ENCODE measurements at regions of chr10 and their contacts with region 1.

Region 1: GRCh38 chr10:128364631-128365030 is 238.4 kb upstream of the MKI67 start:
- DNase-seq: no peak
- H3K4me3 ChIP-seq: no peak overlapping the region
- H3K27ac ChIP-seq: no peak overlapping the region
- H3K4me1 ChIP-seq: no peaks in the 10 kb centered on the region
- H3K27me3 ChIP-seq: no peaks in the 10 kb centered on the region
- CTCF ChIP-seq: no peak

Region 2: GRCh38 chr10:129593953-129594352 is 1229.3 kb after region 1 on chr10:
- intact Hi-C with region 1: loop called (anchors 10 kb)
- DNase-seq: no peak
- H3K4me3 ChIP-seq: no peak overlapping the region
- H3K27ac ChIP-seq: no peak overlapping the region
- H3K4me1 ChIP-seq: no peaks in the 10 kb centered on the region
- H3K27me3 ChIP-seq: no peaks in the 10 kb centered on the region
- CTCF ChIP-seq: no peak